Activated T-helper 2 cell treated with anti-CD3 and anti-CD28 coated beads, Interferon-gamma antibody, Interleukin-2, Interleukin-4, amounts not matched to agents 10 μg/mL and 5 μg/mL and 100 μg/mL, durations not matched to agents 14 hours and 24 hours and 36 hours (primary cell): ENCODE measurements at regions of chr6 and their contacts with region 1.

Region 1: DNA sequence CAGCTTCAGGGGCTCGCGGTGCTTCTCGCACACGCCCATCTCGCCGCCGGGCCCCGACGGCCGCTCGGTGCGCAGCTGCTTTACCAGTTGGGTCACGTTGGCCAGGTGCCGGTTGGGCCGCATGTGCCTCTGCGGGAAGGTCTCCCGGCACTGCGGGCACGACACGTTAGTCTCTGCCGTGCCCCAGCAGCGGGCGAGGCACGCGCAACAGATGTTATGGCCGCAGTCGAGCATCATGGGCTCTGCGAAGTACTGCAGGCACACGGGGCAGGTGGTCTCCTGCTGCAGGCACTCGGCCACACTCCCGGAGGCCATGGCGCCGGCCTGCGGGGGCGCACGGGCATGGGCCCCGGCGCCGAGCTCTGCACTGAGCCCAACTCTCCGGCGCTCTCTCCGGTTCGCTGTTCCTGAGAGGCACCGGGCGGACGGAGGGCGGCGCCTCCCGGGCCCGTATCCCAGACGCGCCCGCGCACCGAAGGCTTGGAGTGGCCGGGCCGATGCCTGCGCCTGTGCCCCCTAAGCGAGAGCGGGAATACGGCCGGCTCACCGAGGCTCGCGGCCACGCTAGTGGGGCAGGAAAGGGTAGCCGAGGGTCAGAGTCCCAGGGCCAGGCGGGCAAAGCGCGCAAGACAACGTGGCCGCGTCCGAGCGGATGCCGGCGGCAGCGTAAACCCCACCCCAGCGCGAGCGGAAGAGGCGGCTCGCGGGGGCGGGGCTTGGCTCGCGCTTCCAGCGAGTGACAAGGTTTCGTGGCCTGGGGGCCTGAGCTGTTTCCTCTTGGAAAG is at the start of gene TRIM27:
- DNase-seq: peak; percentile 78
- H3K4me3 Mint-ChIP-seq: peak within 1 kb of the TSS; percentile 93
- H3K27ac Mint-ChIP-seq: peak within 1 kb of the TSS; percentile 88
- H3K4me1 Mint-ChIP-seq: peaks cover 28% of the 10 kb centered on the region
- H3K27me3 Mint-ChIP-seq: no peaks in the 10 kb centered on the region
- total RNA-seq, gene TRIM27: 64.4 and 69.6 TPM in 2 replicates

Region 2: DNA sequence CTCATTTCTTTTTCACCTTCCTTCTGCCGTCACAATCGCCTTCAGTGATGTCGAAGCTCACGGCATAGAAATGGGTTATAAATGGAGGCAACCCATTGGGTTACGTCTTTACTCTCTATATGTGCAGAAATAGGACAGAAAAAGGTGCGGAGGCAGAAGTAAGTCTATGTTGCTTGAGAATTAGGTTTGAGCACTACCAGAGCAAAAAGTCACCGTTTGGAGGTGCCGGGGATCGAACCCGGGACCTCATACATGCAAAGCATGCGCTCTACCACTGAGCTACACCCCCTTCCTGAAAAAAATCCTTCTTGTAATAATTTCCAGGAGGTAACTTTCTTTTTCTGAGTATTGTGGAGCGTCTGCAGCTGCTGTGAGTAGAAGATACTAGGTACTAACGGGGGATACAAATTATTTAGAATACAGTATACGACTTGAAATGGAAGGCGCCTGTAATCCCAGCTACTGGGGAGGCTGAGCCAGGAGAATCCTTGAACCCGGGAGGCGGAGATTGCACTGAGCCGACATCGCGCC is 133.9 kb before region 1 on chr6:
- intact Hi-C with region 1: no loop called
- DNase-seq: no peak
- H3K4me3 Mint-ChIP-seq: peak overlapping the region; percentile 70
- H3K27ac Mint-ChIP-seq: peak overlapping the region; percentile 35
- H3K4me1 Mint-ChIP-seq: peaks cover 19% of the 10 kb centered on the region
- H3K27me3 Mint-ChIP-seq: peaks cover 83% of the 10 kb centered on the region

Region 3: GRCh38 chr6:28824793-28825731 is 98.4 kb before region 1 on chr6:
- intact Hi-C with region 1: no loop called
- DNase-seq: no peak
- H3K4me3 Mint-ChIP-seq: no peak overlapping the region
- H3K27ac Mint-ChIP-seq: no peak overlapping the region
- H3K4me1 Mint-ChIP-seq: peaks cover 3% of the 10 kb centered on the region
- H3K27me3 Mint-ChIP-seq: peaks cover 65% of the 10 kb centered on the region

Region 4: GRCh38 chr6:28838634-28839442 is 84.7 kb before region 1 on chr6:
- intact Hi-C with region 1: loop called (anchors 2 kb)
- DNase-seq: peak; percentile 75
- H3K4me3 Mint-ChIP-seq: peak overlapping the region; percentile 97
- H3K27ac Mint-ChIP-seq: peak overlapping the region; percentile 79
- H3K4me1 Mint-ChIP-seq: peaks cover 17% of the 10 kb centered on the region
- H3K27me3 Mint-ChIP-seq: peaks cover 43% of the 10 kb centered on the region

Region 5: GRCh38 chr6:28880894-28881780 is 42.4 kb before region 1 on chr6:
- intact Hi-C with region 1: loop called (anchors 5 kb)
- DNase-seq: peak; percentile 32
- H3K4me3 Mint-ChIP-seq: peak overlapping the region; percentile 72
- H3K27ac Mint-ChIP-seq: no peak overlapping the region
- H3K4me1 Mint-ChIP-seq: peaks cover 23% of the 10 kb centered on the region
- H3K27me3 Mint-ChIP-seq: peaks cover 22% of the 10 kb centered on the region